Endothelial cell of umbilical vein (primary cell): ENCODE measurements at regions of chr16 and their contacts with region 1.

Region 1: DNA sequence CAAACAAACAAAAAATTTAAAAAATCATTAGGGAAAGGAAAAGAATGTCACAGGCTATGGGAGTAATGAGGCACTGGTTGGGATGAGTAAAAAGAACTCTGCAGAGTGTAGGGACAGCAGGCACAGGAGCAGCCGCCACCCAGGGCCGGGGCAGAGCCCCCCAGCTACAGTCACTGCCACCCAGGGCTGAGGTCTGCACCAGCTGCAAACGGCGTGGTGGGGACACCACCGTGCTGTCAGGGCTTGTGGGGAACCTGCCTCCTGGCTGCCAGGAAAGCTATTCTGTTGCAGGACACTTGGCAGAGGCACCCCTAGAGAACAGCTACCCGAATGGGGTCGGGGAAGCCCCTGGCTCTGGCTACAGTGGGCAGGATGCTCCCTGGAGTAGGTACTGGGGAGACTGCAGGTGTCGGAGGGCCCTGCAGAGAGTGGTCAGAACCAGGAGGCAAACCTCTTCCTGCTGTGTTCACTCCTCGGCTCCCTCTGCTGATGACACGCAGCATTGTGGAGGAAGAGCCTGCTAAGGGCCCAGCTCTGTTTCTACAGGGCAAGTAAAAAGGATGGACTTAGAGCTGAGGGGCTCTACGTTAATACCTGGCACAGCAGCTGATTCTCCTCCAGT is 32.3 kb upstream of the CAPN15 start:
- DNase-seq: peak; percentile 49
- H3K4me3 ChIP-seq: no peak overlapping the region
- H3K27ac ChIP-seq: no peak overlapping the region
- H3K4me1 ChIP-seq: no peaks in the 10 kb centered on the region
- H3K27me3 ChIP-seq: no peaks in the 10 kb centered on the region
- CTCF ChIP-seq: peak; percentile 49 to 54
- POLR2A ChIP-seq: no peak

Region 2: GRCh38 chr16:303760-304505 is 191.3 kb before region 1 on chr16:
- CTCF ChIA-PET with region 1: no interaction called
- POLR2A ChIA-PET with region 1: no interaction called
- dilution Hi-C with region 1: no loop called
- intact Hi-C with region 1: no loop called
- DNase-seq: no peak
- H3K4me3 ChIP-seq: no peak overlapping the region
- H3K27ac ChIP-seq: no peak overlapping the region
- H3K4me1 ChIP-seq: no peaks in the 10 kb centered on the region
- H3K27me3 ChIP-seq: no peaks in the 10 kb centered on the region
- CTCF ChIP-seq: no peak
- POLR2A ChIP-seq: no peak

Region 3: GRCh38 chr16:391885-392335 is 103.3 kb before region 1 on chr16:
- CTCF ChIA-PET with region 1: interaction called, 11 read pairs
- POLR2A ChIA-PET with region 1: no interaction called
- dilution Hi-C with region 1: no loop called
- intact Hi-C with region 1: loop called (anchors 1 kb)
- DNase-seq: peak; percentile 65
- H3K4me3 ChIP-seq: no peak overlapping the region
- H3K27ac ChIP-seq: no peak overlapping the region
- H3K4me1 ChIP-seq: peaks cover 3% of the 10 kb centered on the region
- H3K27me3 ChIP-seq: no peaks in the 10 kb centered on the region
- CTCF ChIP-seq: peak; percentile 88 to 93
- POLR2A ChIP-seq: no peak